Activated naive CD4-positive, alpha-beta T cell treated with anti-CD3 and anti-CD28 coated beads for 36 hours (primary cell): ENCODE measurements at regions of chr12 and their contacts with region 1.

Region 1: GRCh38 chr12:119988782-119989668 is at the start of gene BICDL1:
- DNase-seq: peak; percentile 97
- H3K4me3 Mint-ChIP-seq: peak within 1 kb of the TSS; percentile 91
- H3K27ac Mint-ChIP-seq: peak within 1 kb of the TSS; percentile 93
- H3K4me1 Mint-ChIP-seq: peaks cover 45% of the 10 kb centered on the region
- H3K27me3 Mint-ChIP-seq: no peaks in the 10 kb centered on the region
- total RNA-seq, gene BICDL1: 128 to 133 TPM

Region 2: GRCh38 chr12:119667577-119668323 is 321.3 kb before region 1 on chr12 and contains the start of gene PRKAB1:
- CTCF ChIA-PET with region 1: no interaction called
- intact Hi-C with region 1: loop called (anchors 1 kb)
- DNase-seq: peak; percentile 96
- H3K4me3 Mint-ChIP-seq: peak within 1 kb of the TSS; percentile 90
- H3K27ac Mint-ChIP-seq: peak within 1 kb of the TSS; percentile 95
- H3K4me1 Mint-ChIP-seq: peaks cover 52% of the 10 kb centered on the region
- H3K27me3 Mint-ChIP-seq: no peaks in the 10 kb centered on the region
- total RNA-seq, gene PRKAB1: 34.3 to 39.8 TPM

Region 3: GRCh38 chr12:119876761-119877638 is 112.0 kb before region 1 on chr12 and contains the start of gene CIT:
- CTCF ChIA-PET with region 1: no interaction called
- intact Hi-C with region 1: loop called (anchors 1 kb)
- DNase-seq: peak; percentile 94
- H3K4me3 Mint-ChIP-seq: peak within 1 kb of the TSS; percentile 97
- H3K27ac Mint-ChIP-seq: peak within 1 kb of the TSS; percentile 42
- H3K4me1 Mint-ChIP-seq: peaks cover 13% of the 10 kb centered on the region
- H3K27me3 Mint-ChIP-seq: no peaks in the 10 kb centered on the region
- total RNA-seq, gene CIT: 78.6 to 78.8 TPM

Region 4: GRCh38 chr12:120265473-120266179 is 276.6 kb after region 1 on chr12 and contains the start of gene PXN:
- CTCF ChIA-PET with region 1: no interaction called
- intact Hi-C with region 1: loop called (anchors 1 kb)
- DNase-seq: peak; percentile 90
- H3K4me3 Mint-ChIP-seq: peak within 1 kb of the TSS; percentile 89
- H3K27ac Mint-ChIP-seq: peak within 1 kb of the TSS; percentile 87
- H3K4me1 Mint-ChIP-seq: peaks cover 44% of the 10 kb centered on the region
- H3K27me3 Mint-ChIP-seq: no peaks in the 10 kb centered on the region
- total RNA-seq, gene PXN: 109 to 112 TPM

Region 5: DNA sequence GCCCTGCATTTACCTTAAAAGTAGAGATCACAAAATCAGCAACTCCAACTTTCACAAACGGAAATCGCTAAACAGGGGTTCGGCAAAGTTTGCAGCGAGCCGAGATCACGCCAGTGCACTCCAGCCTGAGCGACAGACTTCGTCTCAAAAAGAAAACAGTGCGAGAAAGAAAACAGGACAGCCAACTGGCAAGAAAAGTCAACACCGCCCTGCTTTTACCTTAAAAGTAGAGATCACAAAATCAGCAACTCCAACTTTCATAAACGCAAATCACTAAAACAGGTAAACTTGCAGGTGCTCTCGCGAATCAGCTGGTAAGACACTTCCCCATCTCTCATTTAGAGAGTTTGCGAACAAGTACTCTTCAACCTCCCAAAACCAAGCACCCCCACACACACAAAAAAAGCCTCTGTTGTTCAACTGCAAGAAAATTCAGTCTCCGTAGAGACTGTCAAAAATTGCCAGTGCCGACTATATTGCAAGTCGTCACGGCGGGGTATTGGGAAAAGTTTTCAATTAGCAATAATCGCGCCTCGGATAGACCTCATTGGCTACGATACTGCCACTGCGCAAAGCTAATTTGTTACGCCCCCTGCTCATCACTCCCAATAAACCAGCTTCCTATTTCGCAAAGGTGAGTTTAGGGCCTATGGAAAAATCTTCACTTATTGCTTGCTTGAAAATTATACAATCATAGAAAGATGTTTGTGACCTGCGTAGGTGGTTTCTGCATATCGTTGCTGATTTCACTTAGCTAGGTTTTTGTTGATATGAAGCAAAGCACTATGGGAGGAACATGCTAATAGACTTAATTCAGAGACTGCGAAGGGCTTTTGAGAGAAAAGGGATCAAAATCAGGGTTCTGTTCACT is 303.9 kb after region 1 on chr12 and contains the start of gene RNU4-1:
- CTCF ChIA-PET with region 1: no interaction called
- intact Hi-C with region 1: loop called (anchors 5 kb)
- DNase-seq: peak; percentile 88
- H3K4me3 Mint-ChIP-seq: no peak within 1 kb of the TSS
- H3K27ac Mint-ChIP-seq: no peak within 1 kb of the TSS
- H3K4me1 Mint-ChIP-seq: peaks cover 6% of the 10 kb centered on the region
- H3K27me3 Mint-ChIP-seq: no peaks in the 10 kb centered on the region
- total RNA-seq, gene RNU4-1: 685 to 1,294 TPM

Region 6: DNA sequence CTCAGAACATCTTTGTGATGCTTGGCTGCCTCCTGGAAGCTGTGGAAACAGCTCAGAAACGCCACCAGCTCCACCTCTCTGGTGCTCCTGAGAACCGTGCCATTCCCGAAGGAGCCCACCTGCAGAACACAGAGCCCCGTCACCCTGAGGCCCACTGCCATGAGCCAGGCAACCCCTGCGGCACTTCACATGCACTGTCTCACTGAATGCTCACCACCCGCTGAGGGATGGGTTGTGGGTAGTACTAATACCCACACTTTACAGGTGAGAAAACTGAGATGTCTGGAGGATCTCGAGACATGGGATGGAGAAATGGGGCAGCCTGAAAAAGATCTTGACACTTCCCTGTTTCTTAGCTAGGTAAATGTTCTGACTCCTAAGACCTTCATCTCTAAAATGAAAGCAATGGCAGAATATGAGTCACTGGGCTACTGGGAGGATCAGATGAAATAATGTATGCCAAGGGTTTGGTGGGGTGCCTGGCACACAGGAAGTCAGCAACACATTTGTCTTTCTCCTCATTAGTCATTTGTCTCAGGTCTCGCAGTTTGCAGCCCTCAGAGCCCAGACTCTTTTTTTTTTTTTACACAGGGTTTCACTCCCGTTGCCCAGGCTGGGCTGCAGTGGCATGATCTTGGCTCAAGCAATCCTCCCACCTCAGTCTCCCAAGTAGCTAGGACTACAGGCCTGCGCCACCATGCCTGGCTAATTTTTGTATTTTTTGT is 1044.8 kb after region 1 on chr12:
- CTCF ChIA-PET with region 1: no interaction called
- intact Hi-C with region 1: loop called (anchors 5 kb)
- DNase-seq: peak; percentile 82
- H3K4me3 Mint-ChIP-seq: no peak overlapping the region
- H3K27ac Mint-ChIP-seq: peak overlapping the region; percentile 58
- H3K4me1 Mint-ChIP-seq: peaks cover 52% of the 10 kb centered on the region
- H3K27me3 Mint-ChIP-seq: no peaks in the 10 kb centered on the region